ENCODE measurements at regions of chr3 and their contacts with region 1.

Region 1: DNA sequence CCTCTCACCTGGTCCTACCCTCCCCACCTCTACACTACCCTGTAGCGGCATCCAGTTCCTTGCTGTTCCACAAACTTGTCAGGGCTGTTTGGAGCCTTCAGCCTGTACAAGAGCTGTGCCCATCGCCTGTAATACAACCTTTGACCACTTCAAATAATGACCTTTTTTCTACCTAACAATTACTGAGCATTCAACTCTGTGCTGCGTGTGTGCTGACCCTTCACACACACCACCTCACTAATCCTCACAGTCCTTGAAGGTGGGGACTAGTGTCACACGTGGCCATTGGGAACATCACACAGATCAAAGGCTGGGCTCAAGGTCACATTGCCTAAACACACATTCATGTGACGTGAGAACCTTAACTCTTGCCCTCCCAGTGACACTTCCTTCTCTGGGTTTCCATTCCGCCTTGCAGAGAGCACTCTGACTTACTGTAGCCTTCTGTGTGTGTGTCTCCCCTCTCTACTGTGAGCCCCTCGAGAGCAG is 3.1 kb downstream of the C3orf20 start:
- DNase-seq: no peak
- ATAC-seq: no peak
- H3K4me3 ChIP-seq: no peak overlapping the region
- H3K27ac ChIP-seq: no peak overlapping the region
- H3K4me1 ChIP-seq: no peaks in the 10 kb centered on the region
- H3K27me3 ChIP-seq: no peaks in the 10 kb centered on the region

Region 2: GRCh38 chr3:14915636-14916222 is 237.7 kb after region 1 on chr3:
- intact Hi-C with region 1: loop called (anchors 2 to 10 kb)
- DNase-seq: no peak
- ATAC-seq: peak; percentile 19 to 22
- H3K4me3 ChIP-seq: no peak overlapping the region
- H3K27ac ChIP-seq: no peak overlapping the region
- H3K4me1 ChIP-seq: peaks cover 3% of the 10 kb centered on the region
- H3K27me3 ChIP-seq: no peaks in the 10 kb centered on the region